AG04450 (cell line): ENCODE measurements at regions of chr2 and their contacts with region 1.

Region 1: DNA sequence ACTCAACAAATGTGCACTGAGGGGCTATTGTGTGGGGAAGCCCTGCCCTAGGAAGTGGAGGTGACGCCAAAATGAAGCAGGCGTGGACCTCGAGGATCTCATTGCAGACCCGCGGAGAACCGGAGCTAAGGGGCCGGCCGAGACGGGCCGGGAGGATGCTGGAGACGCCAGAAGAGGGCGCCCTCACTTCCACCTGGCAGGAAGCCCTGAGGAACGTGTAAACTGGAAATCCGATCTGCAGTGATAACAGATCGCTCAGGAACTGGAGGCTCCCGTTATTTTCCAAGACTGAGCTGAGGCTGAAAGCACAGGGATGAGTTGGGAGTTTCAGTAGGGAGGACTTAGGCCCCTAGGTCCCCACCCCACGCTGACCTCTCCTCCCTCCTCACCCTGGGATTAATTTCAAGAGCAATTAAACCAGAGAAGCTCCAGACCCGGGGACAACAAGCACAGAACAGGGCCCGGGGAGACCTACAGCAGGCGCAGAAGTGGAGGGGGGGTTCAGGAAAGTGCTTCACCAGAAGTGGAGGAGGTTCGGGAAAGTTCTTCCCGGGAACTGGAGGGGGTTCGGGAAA is 7.7 kb upstream of the COL6A3 start:
- DNase-seq: peak; percentile 77
- H3K4me3 ChIP-seq: no peak overlapping the region
- H3K27ac ChIP-seq: peak overlapping the region; percentile 61
- H3K27me3 ChIP-seq: no peaks in the 10 kb centered on the region
- CTCF ChIP-seq: peak; percentile 90

Region 2: DNA sequence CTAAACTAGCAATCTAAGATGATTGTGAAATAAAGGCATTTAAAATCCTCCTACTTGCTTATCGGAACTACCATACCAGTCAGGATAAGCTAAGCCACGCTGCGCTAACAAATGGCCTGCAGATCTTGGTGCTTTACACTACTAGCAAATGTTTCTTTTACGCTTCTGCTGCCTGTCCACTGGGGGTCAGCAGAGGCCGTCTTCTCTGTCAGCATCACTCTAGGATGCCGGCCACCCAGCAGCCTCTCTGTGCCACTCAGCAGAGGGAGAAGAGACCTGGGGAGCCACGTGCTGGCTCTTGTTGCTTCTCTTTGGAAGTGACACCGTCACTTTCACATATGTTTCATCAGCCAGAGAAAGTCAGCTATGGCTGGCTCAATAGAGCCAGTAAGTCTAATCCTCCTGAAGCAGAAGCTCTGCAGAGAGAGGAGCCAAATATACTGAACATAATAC is 299.4 kb before region 1 on chr2:
- CTCF ChIA-PET with region 1: interaction called, 10 read pairs
- POLR2A ChIA-PET with region 1: no interaction called
- DNase-seq: peak; percentile 54
- H3K4me3 ChIP-seq: no peak overlapping the region
- H3K27ac ChIP-seq: no peak overlapping the region
- H3K27me3 ChIP-seq: no peaks in the 10 kb centered on the region
- CTCF ChIP-seq: peak; percentile 74

Region 3: GRCh38 chr2:237434866-237435311 is 13.3 kb after region 1 on chr2:
- CTCF ChIA-PET with region 1: interaction called, 83 read pairs
- POLR2A ChIA-PET with region 1: interaction called, 3 read pairs
- DNase-seq: no peak
- H3K4me3 ChIP-seq: no peak overlapping the region
- H3K27ac ChIP-seq: peak overlapping the region; percentile 52
- H3K27me3 ChIP-seq: no peaks in the 10 kb centered on the region
- CTCF ChIP-seq: no peak

Region 4: GRCh38 chr2:237456200-237456843 is 34.7 kb after region 1 on chr2:
- CTCF ChIA-PET with region 1: interaction called, 55 read pairs
- POLR2A ChIA-PET with region 1: interaction called, 3 read pairs
- DNase-seq: peak; percentile 97
- H3K4me3 ChIP-seq: no peak overlapping the region
- H3K27ac ChIP-seq: peak overlapping the region; percentile 93
- H3K27me3 ChIP-seq: no peaks in the 10 kb centered on the region
- CTCF ChIP-seq: 0 out of 2 replicates have a peak, but pooled peaks have one; percentile 9

Region 5: DNA sequence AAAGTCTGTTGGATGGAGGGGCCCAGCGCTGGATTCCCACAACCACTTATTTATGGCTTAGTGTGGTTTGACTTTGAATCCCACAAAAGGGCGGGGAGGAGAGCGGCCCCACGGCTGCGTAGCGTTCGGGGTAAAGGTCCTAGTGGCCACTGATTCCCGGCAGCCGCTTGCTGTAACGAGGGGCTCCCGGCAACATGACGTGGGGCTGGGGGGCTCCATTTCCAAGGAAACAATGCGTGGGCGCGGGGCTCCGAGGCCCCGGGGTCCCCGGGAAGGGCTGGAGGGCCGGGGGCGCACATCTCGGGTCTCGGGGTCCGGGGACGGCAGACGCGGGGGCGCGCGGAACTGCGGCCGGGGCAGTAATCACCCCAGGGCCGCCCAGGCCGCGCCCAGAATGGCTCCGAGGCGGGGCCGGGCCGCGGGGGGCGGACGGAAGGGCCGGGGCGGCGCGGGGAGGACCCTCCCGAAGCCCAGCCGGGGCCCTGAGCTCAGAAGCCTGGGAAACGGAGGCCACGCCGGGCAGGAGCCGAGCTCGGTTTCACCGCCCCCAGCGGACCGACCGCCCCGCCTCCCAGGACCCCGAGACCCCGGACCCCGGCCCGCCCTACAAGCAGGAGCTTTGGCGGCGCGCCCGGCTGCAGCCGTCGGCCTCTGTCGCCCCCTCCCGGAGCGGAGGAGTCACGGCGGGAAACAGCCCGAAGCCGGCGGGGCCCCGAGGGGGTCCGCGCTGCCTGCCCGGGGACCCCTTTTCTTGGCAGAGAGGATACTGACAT is 53.5 kb after region 1 on chr2:
- CTCF ChIA-PET with region 1: interaction called, 75 read pairs
- POLR2A ChIA-PET with region 1: interaction called, 7 read pairs
- DNase-seq: peak; percentile 51
- H3K4me3 ChIP-seq: peak overlapping the region; percentile 64
- H3K27ac ChIP-seq: peak overlapping the region; percentile 90
- H3K27me3 ChIP-seq: no peaks in the 10 kb centered on the region
- CTCF ChIP-seq: peak; percentile 74